ENCODE measurements at regions of chr6 and their contacts with region 1.

Region 1: GRCh38 chr6:168956884-168957730 is 296.5 kb downstream of the THBS2 start:
- DNase-seq: peak; percentile 74
- ATAC-seq: peak; percentile 90 to 93

Region 2: DNA sequence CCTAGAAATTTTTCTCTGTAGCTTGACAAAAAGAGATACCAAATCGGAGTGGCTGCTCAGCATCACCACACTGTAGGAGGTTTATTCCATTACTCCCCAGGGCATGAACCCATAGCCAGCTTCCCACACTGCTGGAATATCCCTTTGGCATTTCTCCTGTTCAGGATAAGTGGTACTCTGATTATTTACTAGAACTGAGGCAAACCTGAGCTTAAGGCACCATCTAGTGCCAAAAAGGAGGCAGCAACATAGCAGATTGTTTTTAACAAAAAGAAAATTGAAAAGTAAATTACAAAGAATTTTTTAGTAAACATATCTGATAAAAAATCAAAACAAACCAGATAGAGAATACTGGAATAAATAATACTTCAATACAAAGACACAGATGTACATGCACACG is 563.0 kb after region 1 on chr6:
- intact Hi-C with region 1: loop called in 1 of 2 experiments (anchors 2 kb)
- DNase-seq: no peak
- ATAC-seq: peak in 1 of 2 donors; percentile 59

Region 3: DNA sequence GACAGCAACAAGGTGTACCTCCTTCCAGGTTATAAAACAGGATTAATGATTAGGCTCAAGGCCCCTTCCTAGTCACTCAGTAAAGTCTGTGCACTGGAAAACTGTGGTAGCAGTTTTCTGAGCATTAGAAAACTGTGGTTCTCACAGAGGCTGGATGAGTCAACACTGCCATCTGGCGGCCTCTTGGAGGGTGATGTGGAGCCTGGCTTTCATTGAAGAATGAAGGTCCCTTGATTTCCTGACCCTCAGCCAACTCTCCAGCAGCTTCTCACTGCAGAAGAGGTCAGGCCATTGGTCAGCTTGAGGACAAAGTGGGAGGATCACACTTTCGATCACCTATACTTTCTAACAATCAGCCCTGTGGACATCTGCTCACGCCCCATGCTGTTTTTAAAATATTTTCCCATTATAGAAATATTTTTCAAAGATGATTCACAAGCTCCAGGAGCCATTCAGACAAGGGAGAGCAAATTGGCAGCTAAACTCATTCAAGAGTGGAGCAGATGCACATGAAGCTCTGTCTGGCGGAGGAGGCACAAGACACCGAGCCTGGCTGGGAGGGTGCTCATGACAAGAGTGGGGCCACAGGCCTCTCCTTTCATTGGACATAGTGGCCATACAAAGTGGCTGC is 1572.8 kb after region 1 on chr6:
- intact Hi-C with region 1: loop called in 1 of 2 experiments (anchors 10 kb)
- DNase-seq: peak; percentile 82
- ATAC-seq: peak; percentile 87 to 89